ENCODE measurements at regions of chr3 and their contacts with region 1.

Region 1: DNA sequence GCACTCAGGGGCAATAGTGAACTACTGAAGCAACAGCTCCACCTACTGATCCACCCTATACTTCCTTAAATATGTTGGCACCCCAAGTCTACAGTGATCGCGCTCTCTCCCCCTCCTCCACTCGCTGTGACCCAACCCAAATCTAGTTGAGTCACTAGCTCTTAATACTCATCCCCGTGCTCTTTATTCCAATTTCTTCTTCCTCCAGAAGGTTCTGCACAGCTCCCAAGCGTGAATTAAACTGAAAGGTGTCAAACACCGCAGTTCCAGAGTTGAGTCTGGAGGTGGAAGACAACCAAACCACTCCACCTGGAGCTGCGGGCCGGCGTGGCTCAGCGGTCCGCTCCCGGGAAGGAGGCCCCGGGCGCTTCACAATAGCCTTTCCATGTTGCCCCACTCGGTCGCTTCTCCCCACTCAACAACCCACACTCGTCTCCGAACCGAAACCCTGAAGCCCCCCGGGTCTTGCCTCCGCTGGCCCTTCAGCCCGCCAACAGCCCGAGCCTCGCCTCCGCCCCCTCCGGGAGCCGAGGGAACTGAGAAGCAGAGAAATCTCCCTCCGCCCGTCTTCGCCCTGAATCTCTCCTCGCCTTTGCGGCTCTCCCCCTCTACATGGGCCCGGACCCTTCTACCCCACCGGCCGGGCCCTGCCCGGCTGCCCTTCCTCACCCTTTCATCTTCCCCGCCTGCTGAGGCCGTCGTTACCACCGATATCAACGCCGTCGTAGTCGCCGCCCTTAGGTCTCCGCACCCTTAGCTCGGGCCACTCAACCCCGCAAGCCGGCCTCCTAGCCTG is 578 bp downstream of the NAA50 start:
- DNase-seq: peak; percentile 80
- H3K4me3 Mint-ChIP-seq: peak overlapping the region; percentile 98
- H3K27ac Mint-ChIP-seq: peak overlapping the region; percentile 100
- H3K4me1 Mint-ChIP-seq: peaks cover 57% of the 10 kb centered on the region
- H3K27me3 Mint-ChIP-seq: no peaks in the 10 kb centered on the region

Region 2: GRCh38 chr3:113495035-113495434 is 250.4 kb before region 1 on chr3:
- CTCF ChIA-PET with region 1: interaction called, 21 read pairs
- POLR2A ChIA-PET with region 1: no interaction called
- DNase-seq: peak; percentile 47
- H3K4me3 Mint-ChIP-seq: no peak overlapping the region
- H3K27ac Mint-ChIP-seq: no peak overlapping the region
- H3K4me1 Mint-ChIP-seq: peaks cover 8% of the 10 kb centered on the region
- H3K27me3 Mint-ChIP-seq: no peaks in the 10 kb centered on the region

Region 3: GRCh38 chr3:113514265-113514769 is 231.2 kb before region 1 on chr3:
- CTCF ChIA-PET with region 1: interaction called, 10 read pairs
- POLR2A ChIA-PET with region 1: interaction called, 18 read pairs
- DNase-seq: no peak
- H3K4me3 Mint-ChIP-seq: no peak overlapping the region
- H3K27ac Mint-ChIP-seq: no peak overlapping the region
- H3K4me1 Mint-ChIP-seq: peaks cover 9% of the 10 kb centered on the region
- H3K27me3 Mint-ChIP-seq: peaks cover 23% of the 10 kb centered on the region

Region 4: DNA sequence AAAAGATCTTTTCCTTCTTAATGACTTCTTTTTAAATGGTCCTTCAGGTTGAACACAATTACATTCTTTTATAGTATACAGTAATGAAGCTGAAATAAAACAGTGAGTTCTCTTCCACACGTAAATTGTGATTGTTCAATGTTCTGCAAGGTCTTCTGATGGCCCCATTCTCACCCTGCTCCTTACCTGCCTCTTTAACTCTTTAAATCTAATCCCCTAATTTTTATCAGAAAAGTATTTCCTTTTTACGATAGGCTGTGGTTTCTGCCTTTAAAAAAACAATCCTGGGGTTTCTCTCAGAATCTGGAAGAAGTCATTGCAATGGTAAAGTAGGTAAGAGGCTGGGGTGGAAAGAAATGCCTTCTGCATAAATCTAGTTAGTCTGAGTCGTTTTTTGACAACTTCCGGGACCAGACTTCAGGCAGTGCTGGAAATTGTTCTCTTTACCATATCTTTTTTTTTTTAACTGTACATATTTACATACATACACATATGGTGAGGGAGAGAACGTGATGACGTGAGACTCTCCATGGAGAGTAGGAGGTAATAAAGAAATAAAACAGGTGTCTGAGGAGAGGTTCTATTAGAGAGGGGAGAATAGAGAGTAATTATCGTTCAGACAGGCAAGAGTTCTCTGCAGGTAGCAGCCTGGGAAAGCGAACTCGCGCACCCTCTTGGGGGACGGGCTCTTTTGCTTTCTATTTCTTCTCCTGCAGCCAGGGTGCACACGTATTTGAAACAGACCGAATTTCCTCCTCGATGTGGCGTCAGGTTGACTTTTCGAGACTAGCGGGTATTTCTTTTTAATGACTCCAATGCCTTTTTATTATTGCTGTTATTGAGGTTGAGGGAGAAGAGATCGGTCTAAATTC is 213.4 kb before region 1 on chr3 and contains the start of gene SIDT1:
- CTCF ChIA-PET with region 1: interaction called, 3 read pairs
- POLR2A ChIA-PET with region 1: interaction called, 12 read pairs
- DNase-seq: peak; percentile 75
- H3K4me3 Mint-ChIP-seq: peak within 1 kb of the TSS; percentile 98
- H3K27ac Mint-ChIP-seq: peak within 1 kb of the TSS; percentile 96
- H3K4me1 Mint-ChIP-seq: peaks cover 52% of the 10 kb centered on the region
- H3K27me3 Mint-ChIP-seq: peaks cover 5% of the 10 kb centered on the region
- total RNA-seq, gene SIDT1: 23.9 to 25.5 TPM

Region 5: GRCh38 chr3:113546414-113546893 is 199.0 kb before region 1 on chr3:
- CTCF ChIA-PET with region 1: no interaction called
- POLR2A ChIA-PET with region 1: no interaction called
- DNase-seq: no peak
- H3K4me3 Mint-ChIP-seq: no peak overlapping the region
- H3K27ac Mint-ChIP-seq: no peak overlapping the region
- H3K4me1 Mint-ChIP-seq: peaks cover 15% of the 10 kb centered on the region
- H3K27me3 Mint-ChIP-seq: no peaks in the 10 kb centered on the region

Region 6: GRCh38 chr3:113696658-113697499 is 48.6 kb before region 1 on chr3:
- CTCF ChIA-PET with region 1: interaction called, 26 read pairs
- POLR2A ChIA-PET with region 1: interaction called, 58 read pairs
- DNase-seq: peak; percentile 99
- H3K4me3 Mint-ChIP-seq: no peak overlapping the region
- H3K27ac Mint-ChIP-seq: no peak overlapping the region
- H3K4me1 Mint-ChIP-seq: peaks cover 17% of the 10 kb centered on the region
- H3K27me3 Mint-ChIP-seq: no peaks in the 10 kb centered on the region

Region 7: DNA sequence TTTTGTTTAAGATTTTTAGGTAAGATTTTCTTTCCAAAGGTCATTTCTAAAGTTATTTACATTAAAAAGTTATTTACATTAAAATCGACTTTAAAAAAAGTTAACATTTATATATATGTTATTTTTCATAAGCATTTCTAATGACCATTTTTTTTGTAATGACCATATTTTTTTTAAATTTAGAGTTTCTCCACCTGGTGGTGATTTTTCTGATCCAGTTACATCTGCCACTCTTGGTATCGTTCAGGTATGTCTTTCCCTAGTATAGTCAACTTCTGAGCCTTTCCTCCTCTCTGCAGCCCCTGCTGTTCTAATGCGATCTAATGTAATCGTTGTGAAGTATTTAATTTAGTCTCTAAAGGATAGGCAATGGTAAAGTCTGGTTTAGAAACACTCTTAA is 50.2 kb after region 1 on chr3:
- CTCF ChIA-PET with region 1: no interaction called
- POLR2A ChIA-PET with region 1: no interaction called
- DNase-seq: no peak
- H3K4me3 Mint-ChIP-seq: no peak overlapping the region
- H3K27ac Mint-ChIP-seq: no peak overlapping the region
- H3K4me1 Mint-ChIP-seq: no peaks in the 10 kb centered on the region
- H3K27me3 Mint-ChIP-seq: no peaks in the 10 kb centered on the region

Region 8: DNA sequence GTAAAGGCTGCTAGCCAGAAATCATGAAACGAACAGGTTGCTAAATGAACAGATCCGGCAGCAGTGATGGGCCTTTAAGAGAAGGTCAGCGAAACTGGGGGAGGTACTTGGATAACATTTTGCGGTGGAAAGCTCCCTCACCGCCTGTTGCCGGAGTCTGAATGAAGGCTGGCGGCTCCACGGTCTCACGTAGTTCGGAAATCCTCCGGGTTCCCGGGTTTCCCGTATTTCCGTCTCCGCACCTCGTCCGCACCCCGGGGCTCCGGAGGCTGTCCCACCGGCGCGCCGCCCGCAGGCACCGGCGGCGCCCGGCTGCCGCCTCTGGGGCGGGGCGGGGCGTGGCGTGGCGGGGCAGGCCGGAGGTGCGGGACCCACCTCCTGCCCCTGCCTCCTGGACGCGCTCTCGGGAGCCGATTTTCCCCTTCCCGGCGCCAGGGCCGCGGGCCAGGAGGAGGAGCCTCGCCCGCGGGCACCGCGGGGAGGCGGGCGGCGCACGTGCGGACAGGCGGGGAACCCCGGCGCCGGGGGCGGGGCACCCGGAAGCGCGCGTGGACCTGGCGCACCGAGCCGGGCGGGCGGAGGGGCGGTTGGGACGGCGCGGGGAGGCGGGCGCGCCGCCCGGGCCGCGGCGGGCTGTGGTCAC is 202.0 kb after region 1 on chr3 and contains the start of gene ZDHHC23:
- CTCF ChIA-PET with region 1: no interaction called
- POLR2A ChIA-PET with region 1: no interaction called
- DNase-seq: peak; percentile 68
- H3K4me3 Mint-ChIP-seq: peak within 1 kb of the TSS; percentile 75
- H3K27ac Mint-ChIP-seq: no peak within 1 kb of the TSS
- H3K4me1 Mint-ChIP-seq: peaks cover 14% of the 10 kb centered on the region
- H3K27me3 Mint-ChIP-seq: peaks cover 36% of the 10 kb centered on the region
- total RNA-seq, gene ZDHHC23: 3.1 to 3.9 TPM

Measured in activated CD4-positive, alpha-beta memory T cell treated with anti-CD3 and anti-CD28 coated beads, Interleukin-2, amount 10 ng/mL, durations not matched to agents 7 days and 5 days (primary cell).